PC-9 (cell line): ENCODE measurements at regions of chr14 and their contacts with region 1.

Region 1: DNA sequence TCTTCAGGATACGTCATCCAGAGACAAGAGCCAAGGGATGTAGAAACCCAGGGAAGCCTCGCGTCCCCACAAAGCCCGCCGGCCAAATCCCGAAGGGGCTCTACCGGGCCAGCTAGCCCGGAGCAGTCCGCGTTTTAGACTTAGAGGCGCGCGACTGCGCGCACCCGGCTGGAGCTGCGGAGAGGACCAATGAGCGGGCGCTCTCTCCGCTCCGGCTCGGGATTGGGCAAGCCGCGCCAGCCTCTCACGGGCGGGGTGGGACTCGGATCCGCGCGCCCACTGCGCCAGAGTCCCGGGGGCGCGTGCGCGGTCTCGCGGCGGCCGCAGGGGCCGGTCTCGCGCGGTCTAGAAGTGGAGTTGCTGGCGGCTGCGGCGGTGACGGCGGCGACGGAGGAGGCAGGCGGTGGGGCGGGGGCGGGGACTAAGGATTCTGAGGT is 239 bp upstream of the PALS1 start:
- DNase-seq: peak; percentile 91 to 99
- H3K4me3 ChIP-seq: peak overlapping the region; percentile 93
- H3K27ac ChIP-seq: peak overlapping the region; percentile 91
- H3K4me1 ChIP-seq: peaks cover 17% of the 10 kb centered on the region; the same call in 1 of the 2 replicates
- H3K27me3 ChIP-seq: no peaks in the 10 kb centered on the region
- CTCF ChIP-seq: no peak

Region 2: DNA sequence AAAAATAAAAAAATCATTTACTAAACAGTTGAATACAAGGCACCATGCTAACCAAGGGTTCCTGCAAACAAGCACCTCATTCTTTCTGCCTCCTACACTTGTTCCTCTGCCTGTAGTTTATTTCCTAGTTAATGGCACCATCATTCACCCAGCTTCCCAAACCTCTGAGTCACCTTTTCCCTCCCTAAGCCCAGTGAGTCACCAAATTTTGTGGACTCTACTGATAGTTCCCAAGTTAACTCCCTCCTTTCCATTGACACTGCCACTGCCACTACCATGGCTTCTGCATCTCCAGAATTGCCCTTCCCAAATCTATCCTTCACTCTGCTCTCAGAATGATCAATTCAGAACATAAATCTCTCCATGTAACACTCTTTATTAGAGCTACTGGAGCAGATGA is 53.8 kb before region 1 on chr14:
- CTCF ChIA-PET with region 1: no interaction called
- POLR2A ChIA-PET with region 1: interaction called, 4 read pairs
- intact Hi-C with region 1: loop called (anchors 1 kb)
- DNase-seq: peak; percentile 67 to 90
- H3K4me3 ChIP-seq: peak overlapping the region; percentile 30; the same call in 1 of the 2 replicates
- H3K27ac ChIP-seq: peak overlapping the region; percentile 73
- H3K4me1 ChIP-seq: peaks cover 44% of the 10 kb centered on the region
- H3K27me3 ChIP-seq: no peaks in the 10 kb centered on the region
- CTCF ChIP-seq: no peak

Region 3: GRCh38 chr14:67251573-67252226 is 10.7 kb after region 1 on chr14:
- CTCF ChIA-PET with region 1: no interaction called
- POLR2A ChIA-PET with region 1: interaction called, 14 read pairs
- intact Hi-C with region 1: no loop called
- DNase-seq: peak; percentile 51 to 56
- H3K4me3 ChIP-seq: no peak overlapping the region
- H3K27ac ChIP-seq: no peak overlapping the region
- H3K4me1 ChIP-seq: peaks cover 14% of the 10 kb centered on the region
- H3K27me3 ChIP-seq: no peaks in the 10 kb centered on the region
- CTCF ChIP-seq: no peak

Region 4: GRCh38 chr14:67359775-67360648 is 119.0 kb after region 1 on chr14 and contains the starts of genes ATP6V1D and EIF2S1:
- CTCF ChIA-PET with region 1: no interaction called
- POLR2A ChIA-PET with region 1: interaction called, 3 read pairs
- intact Hi-C with region 1: loop called (anchors 5 kb)
- DNase-seq: peak; percentile 97 to 100
- H3K4me3 ChIP-seq: peak within 1 kb of the TSS; percentile 75
- H3K27ac ChIP-seq: peak within 1 kb of the TSS; percentile 71
- H3K4me1 ChIP-seq: peaks cover 44% of the 10 kb centered on the region
- H3K27me3 ChIP-seq: no peaks in the 10 kb centered on the region
- CTCF ChIP-seq: peak; percentile 100
- total RNA-seq, gene ATP6V1D: 62.7 and 67.9 TPM in 2 replicates
- total RNA-seq, gene EIF2S1: 144 and 146 TPM in 2 replicates

Region 5: GRCh38 chr14:67457782-67458181 is 216.8 kb after region 1 on chr14:
- CTCF ChIA-PET with region 1: no interaction called
- POLR2A ChIA-PET with region 1: no interaction called
- intact Hi-C with region 1: no loop called
- DNase-seq: peak; percentile 37 to 38
- H3K4me3 ChIP-seq: no peak overlapping the region
- H3K27ac ChIP-seq: no peak overlapping the region
- H3K4me1 ChIP-seq: peaks cover 15% of the 10 kb centered on the region
- H3K27me3 ChIP-seq: no peaks in the 10 kb centered on the region
- CTCF ChIP-seq: no peak